PC-9 (cell line): ENCODE measurements at regions of chr5 and their contacts with region 1.

Region 1: DNA sequence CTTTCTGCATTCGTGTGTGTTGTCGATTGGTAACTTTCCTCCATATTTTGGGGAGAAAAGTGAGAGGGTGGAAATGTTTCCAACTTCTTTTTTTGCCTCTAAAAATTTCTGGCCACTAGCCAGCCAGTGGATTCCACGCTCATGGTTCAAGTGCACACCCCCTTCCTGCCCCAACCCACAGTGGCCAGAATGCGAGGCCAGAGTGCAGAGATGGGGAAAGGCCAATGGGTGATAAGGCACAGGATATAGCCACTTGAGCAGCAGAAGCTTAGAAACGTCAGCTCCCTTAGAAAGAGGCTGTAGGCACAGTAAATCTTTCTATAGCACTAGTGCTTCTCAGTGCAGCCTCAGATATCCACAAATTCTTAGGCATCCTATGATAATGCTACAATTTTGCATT is 75.8 kb upstream of the ADRB2 start:
- DNase-seq: no peak
- H3K4me3 ChIP-seq: no peak overlapping the region
- H3K27ac ChIP-seq: no peak overlapping the region
- H3K4me1 ChIP-seq: no peaks in the 10 kb centered on the region
- H3K27me3 ChIP-seq: no peaks in the 10 kb centered on the region
- CTCF ChIP-seq: no peak

Region 2: DNA sequence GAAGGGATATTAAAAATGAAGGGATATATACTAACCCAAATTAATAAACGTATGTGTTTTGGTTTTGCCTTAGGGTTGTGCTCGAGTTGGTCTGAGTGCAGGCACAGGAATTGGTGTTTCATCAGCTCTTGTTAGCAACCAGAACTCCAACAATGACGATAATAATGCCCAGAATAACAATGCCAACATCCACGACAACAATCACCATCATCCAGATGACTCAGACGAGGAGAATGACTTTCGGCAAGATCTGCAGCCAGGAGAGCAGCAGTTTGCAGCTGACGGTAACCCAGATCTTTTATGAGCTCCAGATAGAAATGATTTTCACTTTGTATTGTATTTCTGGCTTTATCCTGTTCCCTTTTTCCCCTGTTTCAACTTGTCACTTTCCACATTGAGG is 333.7 kb before region 1 on chr5:
- CTCF ChIA-PET with region 1: no interaction called
- POLR2A ChIA-PET with region 1: interaction called, 16 read pairs
- intact Hi-C with region 1: no loop called
- DNase-seq: no peak
- H3K4me3 ChIP-seq: no peak overlapping the region
- H3K27ac ChIP-seq: no peak overlapping the region
- H3K4me1 ChIP-seq: no peaks in the 10 kb centered on the region
- H3K27me3 ChIP-seq: no peaks in the 10 kb centered on the region
- CTCF ChIP-seq: no peak